Calu3 (cell line): ENCODE measurements at regions of chr19 and their contacts with region 1.

Region 1: GRCh38 chr19:855565-856274 is 3.6 kb downstream of the ELANE start:
- DNase-seq: no peak
- H3K4me3 Mint-ChIP-seq: no peak overlapping the region
- H3K27ac Mint-ChIP-seq: no peak overlapping the region
- H3K4me1 Mint-ChIP-seq: no peaks in the 10 kb centered on the region
- H3K27me3 Mint-ChIP-seq: peaks cover 8% of the 10 kb centered on the region
- CTCF ChIP-seq: no peak

Region 2: DNA sequence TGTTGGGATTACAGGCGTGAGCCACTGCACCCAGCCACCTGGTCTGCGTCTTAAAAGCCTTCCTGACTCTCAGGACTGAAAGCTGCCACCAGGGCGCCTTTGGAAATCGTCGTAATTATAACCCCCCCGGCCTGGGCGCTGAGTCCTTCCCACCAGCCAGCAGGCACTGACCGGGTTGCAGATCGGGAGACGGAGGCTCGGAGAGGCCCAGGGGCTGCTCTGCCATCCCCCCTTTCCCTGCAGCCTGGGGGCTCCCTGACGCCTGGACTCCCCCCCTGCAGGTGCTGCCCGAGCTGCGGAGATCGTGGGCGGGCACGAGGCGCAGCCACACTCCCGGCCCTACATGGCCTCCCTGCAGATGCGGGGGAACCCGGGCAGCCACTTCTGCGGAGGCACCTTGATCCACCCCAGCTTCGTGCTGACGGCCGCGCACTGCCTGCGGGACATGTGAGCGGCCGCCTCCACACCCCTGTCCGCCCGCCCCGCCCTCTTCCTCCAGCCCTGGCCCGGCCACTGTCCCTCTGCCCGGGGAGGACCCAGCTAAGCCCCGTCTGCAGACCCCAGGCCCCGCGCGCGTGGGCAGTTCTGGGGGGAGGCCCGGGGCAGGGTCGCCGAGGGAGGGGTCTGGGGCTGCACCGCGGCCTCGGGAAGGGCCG is 12.4 kb before region 1 on chr19:
- CTCF ChIA-PET with region 1: no interaction called
- intact Hi-C with region 1: no loop called
- DNase-seq: peak; percentile 40
- H3K4me3 Mint-ChIP-seq: peak overlapping the region; percentile 24
- H3K27ac Mint-ChIP-seq: no peak overlapping the region
- H3K4me1 Mint-ChIP-seq: peaks cover 9% of the 10 kb centered on the region
- H3K27me3 Mint-ChIP-seq: peaks cover 59% of the 10 kb centered on the region
- CTCF ChIP-seq: no peak

Region 3: DNA sequence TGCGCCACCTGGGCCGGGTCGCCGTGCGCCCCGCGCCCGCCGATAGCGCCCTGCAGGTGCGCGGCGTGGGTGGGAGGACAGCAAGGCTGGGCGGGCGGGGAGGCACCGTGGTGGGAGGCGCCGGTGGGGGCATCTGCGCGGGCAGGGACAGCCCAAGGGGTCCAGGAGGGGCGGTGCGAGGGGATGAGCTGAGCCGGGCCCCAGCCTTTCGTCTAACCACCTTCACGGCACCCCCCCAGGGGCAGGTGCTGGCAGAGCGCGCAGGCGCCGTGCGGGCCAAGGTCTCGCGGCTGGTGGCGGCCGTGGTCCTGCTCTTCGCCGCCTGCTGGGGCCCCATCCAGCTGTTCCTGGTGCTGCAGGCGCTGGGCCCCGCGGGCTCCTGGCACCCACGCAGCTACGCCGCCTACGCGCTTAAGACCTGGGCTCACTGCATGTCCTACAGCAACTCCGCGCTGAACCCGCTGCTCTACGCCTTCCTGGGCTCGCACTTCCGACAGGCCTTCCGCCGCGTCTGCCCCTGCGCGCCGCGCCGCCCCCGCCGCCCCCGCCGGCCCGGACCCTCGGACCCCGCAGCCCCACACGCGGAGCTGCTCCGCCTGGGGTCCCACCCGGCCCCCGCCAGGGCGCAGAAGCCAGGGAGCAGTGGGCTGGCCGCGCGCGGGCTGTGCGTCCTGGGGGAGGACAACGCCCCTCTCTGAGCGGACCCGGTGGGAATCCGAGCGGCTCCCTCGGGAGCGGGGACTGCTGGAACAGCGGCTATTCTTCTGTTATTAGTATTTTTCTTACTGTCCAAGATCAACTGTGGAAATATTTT is 64.5 kb after region 1 on chr19:
- CTCF ChIA-PET with region 1: interaction called, 5 read pairs
- intact Hi-C with region 1: loop called (anchors 2 kb)
- DNase-seq: peak; percentile 46
- H3K4me3 Mint-ChIP-seq: no peak overlapping the region
- H3K27ac Mint-ChIP-seq: no peak overlapping the region
- H3K4me1 Mint-ChIP-seq: no peaks in the 10 kb centered on the region
- H3K27me3 Mint-ChIP-seq: peaks cover 20% of the 10 kb centered on the region
- CTCF ChIP-seq: no peak

Region 4: DNA sequence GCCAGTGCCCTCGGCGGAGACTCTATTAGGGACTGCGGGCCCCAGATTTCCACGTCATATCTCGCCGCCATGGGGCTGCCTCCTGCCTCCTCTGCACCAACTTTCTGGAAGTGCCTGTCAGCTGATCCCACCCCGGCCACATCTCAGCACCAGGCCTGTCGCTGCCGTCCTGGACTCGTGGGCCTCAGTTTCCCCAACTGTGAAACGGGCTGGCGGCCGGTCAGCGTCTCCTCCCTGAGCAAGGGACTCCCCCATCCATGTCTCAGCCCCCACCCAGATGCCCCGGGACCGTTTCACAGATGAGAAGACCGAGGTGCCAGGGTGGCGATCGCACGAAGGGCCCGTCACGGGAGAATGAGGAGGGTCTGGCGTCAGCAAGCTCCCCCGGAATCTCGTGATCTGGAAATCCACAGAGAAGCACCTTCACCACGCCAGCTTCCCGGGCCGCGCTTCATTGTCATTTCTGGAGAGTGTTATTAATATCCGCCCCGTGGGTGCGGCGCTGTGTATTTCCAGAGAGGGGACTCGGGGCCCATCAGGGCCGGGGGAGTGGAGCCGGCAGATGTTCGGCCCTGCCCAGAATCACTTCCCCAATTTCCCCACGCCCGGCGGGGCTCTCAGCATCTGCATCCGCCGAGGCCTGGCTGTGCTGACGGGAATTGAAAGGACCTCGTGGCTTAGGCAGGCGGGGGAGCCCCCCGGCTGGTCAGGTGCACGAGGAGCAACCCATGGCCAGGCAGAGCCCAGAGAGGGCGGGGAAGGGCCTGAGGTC is 91.7 kb after region 1 on chr19:
- CTCF ChIA-PET with region 1: no interaction called
- intact Hi-C with region 1: no loop called
- DNase-seq: no peak
- H3K4me3 Mint-ChIP-seq: no peak overlapping the region
- H3K27ac Mint-ChIP-seq: no peak overlapping the region
- H3K4me1 Mint-ChIP-seq: peaks cover 9% of the 10 kb centered on the region
- H3K27me3 Mint-ChIP-seq: peaks cover 17% of the 10 kb centered on the region
- CTCF ChIP-seq: no peak